ENCODE measurements at regions of chr15 and their contacts with region 1.

Region 1: GRCh38 chr15:34367101-34368081 is at the start of gene LPCAT4:
- DNase-seq: peak; percentile 81 to 91 (median 89)
- ATAC-seq: peak; percentile 94
- H3K4me3 ChIP-seq: peak within 1 kb of the TSS; percentile 82
- H3K4me3 Mint-ChIP-seq: peak within 1 kb of the TSS; percentile 94 to 99 (median 96)
- H3K27ac ChIP-seq: peak within 1 kb of the TSS; percentile 88
- H3K27ac Mint-ChIP-seq: peak within 1 kb of the TSS; percentile 86 to 98 (median 94)
- H3K4me1 ChIP-seq: peaks cover 13 to 17% of the 10 kb centered on the region in 2 donors
- H3K4me1 Mint-ChIP-seq: peaks cover 5 to 45% (median 27%) of the 10 kb centered on the region in 7 donors
- H3K27me3 ChIP-seq: no peaks in the 10 kb centered on the region
- H3K27me3 Mint-ChIP-seq: no peaks in the 10 kb centered on the region
- total RNA-seq, gene LPCAT4: 40.0 to 95.5 (median 63.4) TPM

Region 2: GRCh38 chr15:33425142-33425541 is 942.2 kb before region 1 on chr15:
- CTCF ChIA-PET with region 1: no interaction called
- POLR2A ChIA-PET with region 1: no interaction called
- intact Hi-C with region 1: no loop called
- DNase-seq: no peak
- ATAC-seq: no peak
- H3K4me3 ChIP-seq: no peak overlapping the region
- H3K4me3 Mint-ChIP-seq: no peak overlapping the region
- H3K27ac ChIP-seq: no peak overlapping the region
- H3K27ac Mint-ChIP-seq: no peak overlapping the region
- H3K4me1 ChIP-seq: no peaks in the 10 kb centered on the region
- H3K4me1 Mint-ChIP-seq: no peaks in the 10 kb centered on the region
- H3K27me3 ChIP-seq: no peaks in the 10 kb centered on the region
- H3K27me3 Mint-ChIP-seq: peaks cover 3 to 22% (median 9%) of the 10 kb centered on the region in 5 donors

Region 3: DNA sequence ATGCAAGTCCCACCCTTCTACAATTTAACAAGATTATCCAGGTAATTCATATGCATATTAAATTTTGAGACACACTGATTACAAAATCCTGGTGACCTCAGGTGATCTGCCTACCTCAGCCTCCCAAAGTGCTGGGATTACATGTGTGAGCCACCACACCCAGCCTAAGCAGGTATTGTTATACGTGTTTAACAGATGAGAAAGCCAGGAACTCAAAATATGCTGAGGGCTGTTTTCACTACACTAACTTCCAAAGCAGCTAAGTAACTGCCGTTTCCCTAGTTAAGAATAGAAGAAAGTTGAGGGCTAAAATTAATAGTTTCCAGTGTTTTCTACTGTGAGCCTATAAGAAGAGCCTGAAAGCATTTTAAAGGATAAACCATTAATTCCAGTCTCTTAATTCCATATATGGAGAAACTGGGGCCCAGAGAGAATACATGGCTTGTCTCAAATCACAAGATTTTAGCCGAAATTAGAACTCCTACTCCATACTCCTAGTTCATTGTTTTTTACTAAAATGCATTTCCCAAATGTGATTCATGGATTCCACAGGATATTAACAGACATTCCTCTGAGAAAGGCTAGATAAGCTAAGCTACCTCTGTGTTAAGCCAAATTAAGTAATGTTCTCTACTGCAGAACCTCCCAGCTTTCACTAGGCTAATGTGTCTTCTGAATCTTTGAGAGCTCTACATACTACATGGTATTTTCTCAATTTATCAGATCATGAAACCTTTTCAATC is 311.4 kb before region 1 on chr15:
- CTCF ChIA-PET with region 1: interaction called, 6 read pairs
- POLR2A ChIA-PET with region 1: no interaction called
- intact Hi-C with region 1: loop called in 1 of 2 experiments (anchors 1 kb)
- DNase-seq: no peak
- ATAC-seq: no peak
- H3K4me3 ChIP-seq: no peak overlapping the region
- H3K4me3 Mint-ChIP-seq: no peak overlapping the region
- H3K27ac ChIP-seq: no peak overlapping the region
- H3K27ac Mint-ChIP-seq: no peak overlapping the region
- H3K4me1 ChIP-seq: no peaks in the 10 kb centered on the region
- H3K4me1 Mint-ChIP-seq: no peaks in the 10 kb centered on the region
- H3K27me3 ChIP-seq: no peaks in the 10 kb centered on the region
- H3K27me3 Mint-ChIP-seq: peaks cover 0 to 15% (median under 1%) of the 10 kb centered on the region in 5 donors

Region 4: GRCh38 chr15:34223904-34224596 is 143.3 kb before region 1 on chr15:
- CTCF ChIA-PET with region 1: interaction called, 4 read pairs
- POLR2A ChIA-PET with region 1: interaction called, 9 read pairs
- intact Hi-C with region 1: loop called in 1 of 2 experiments (anchors 1 kb)
- DNase-seq: no peak
- ATAC-seq: no peak
- H3K4me3 ChIP-seq: peak overlapping the region; percentile 82
- H3K4me3 Mint-ChIP-seq: peak overlapping the region; percentile 88 to 100 (median 94)
- H3K27ac ChIP-seq: peak overlapping the region; percentile 83
- H3K27ac Mint-ChIP-seq: peak overlapping the region; percentile 93 to 100 (median 99)
- H3K4me1 ChIP-seq: peaks cover 5 to 13% of the 10 kb centered on the region in 2 donors
- H3K4me1 Mint-ChIP-seq: peaks cover 9 to 35% (median 30%) of the 10 kb centered on the region in 7 donors
- H3K27me3 ChIP-seq: no peaks in the 10 kb centered on the region
- H3K27me3 Mint-ChIP-seq: peaks cover 0 to 5% (median 0%) of the 10 kb centered on the region in 5 donors

Region 5: DNA sequence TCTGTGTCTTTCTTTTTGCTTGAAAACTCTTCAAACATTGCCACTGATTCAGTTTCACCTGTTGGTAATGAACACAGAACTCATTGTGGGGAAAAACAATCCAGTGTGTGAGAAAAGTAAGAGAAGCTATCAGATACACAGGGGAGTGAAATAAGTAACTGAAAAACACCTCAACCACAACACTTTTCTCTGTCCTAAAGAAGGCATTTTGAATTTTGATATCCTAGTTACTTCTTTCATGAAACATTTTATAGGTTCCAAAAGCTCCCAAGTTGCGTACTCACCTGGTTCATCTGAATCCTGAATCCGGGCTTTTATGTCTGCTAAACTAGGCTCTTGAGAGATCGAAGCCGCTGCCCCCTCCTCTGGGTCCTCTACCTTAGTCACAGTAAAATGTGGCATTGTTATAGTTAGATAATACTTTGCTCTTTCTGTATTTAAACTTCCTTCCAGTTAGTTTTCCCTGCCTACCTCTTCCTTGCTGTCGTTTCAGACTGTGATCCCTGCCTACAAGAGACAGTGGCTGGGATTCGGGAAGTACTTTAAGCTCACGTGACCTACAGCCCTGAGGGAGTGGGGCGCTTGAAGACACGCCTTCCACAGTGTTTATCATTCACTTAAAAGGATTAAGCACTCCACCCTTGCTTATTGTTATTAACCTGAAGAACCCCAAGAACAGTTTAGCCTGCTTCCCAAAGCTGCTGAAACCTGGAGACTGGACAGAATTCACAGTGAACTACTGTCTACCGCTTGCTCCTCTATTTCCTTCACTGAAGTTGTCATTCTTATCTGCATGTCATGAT is 48.9 kb before region 1 on chr15:
- CTCF ChIA-PET with region 1: interaction called, 3 read pairs
- POLR2A ChIA-PET with region 1: interaction called, 10 read pairs
- intact Hi-C with region 1: loop called in 1 of 2 experiments (anchors 1 kb)
- DNase-seq: peak in 4 of 9 donors; percentile 29 to 38 (median 36)
- ATAC-seq: peak; percentile 83
- H3K4me3 ChIP-seq: peak overlapping the region; percentile 71
- H3K4me3 Mint-ChIP-seq: peak overlapping the region; percentile 92 to 99 (median 97)
- H3K27ac ChIP-seq: peak overlapping the region; percentile 76
- H3K27ac Mint-ChIP-seq: peak overlapping the region; percentile 91 to 99 (median 95)
- H3K4me1 ChIP-seq: peaks cover 0 to 24% of the 10 kb centered on the region in 2 donors
- H3K4me1 Mint-ChIP-seq: peaks cover 36 to 85% (median 62%) of the 10 kb centered on the region in 7 donors
- H3K27me3 ChIP-seq: no peaks in the 10 kb centered on the region
- H3K27me3 Mint-ChIP-seq: no peaks in the 10 kb centered on the region

Region 6: DNA sequence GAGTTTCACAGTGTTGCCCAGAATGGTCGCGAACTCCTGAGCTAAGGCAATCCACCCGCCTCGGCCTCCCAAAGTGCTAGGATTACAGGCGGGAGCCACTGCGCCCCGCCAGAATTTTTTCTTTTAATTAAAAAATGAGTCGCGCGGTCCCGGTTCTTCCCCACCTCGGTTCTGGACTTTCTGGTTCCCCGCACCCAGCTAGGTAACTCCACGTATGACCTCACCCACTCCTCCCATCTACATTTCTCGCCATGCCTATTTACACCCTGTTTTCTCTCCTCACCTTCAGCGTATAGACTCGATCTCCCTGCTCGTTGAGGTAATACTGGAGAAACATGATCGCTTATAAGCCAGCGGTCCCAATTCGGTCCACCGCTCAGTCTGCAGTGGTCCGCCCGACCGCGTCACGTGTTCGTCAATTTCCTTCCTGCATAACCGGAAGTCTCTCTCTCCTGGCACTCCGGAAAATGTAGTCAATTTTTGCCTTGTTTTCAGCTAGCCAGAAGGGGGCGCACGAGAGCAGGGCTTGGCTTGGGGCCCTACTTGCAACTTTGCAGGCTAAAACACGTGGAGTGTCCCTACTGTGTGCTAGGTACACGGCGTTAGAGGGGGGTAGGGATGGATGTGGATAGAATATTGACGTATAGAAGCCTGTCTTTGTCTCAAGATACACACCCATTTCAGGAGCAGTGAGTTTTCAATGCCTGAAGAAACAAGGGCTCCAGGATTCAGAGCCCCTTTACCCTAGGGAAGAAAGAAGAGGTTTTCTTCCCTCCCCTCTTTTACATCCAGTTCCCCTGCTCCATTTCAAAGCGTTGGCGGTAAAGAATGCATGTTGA is 24.4 kb before region 1 on chr15 and contains the starts of genes NOP10 and NUTM1:
- CTCF ChIA-PET with region 1: interaction called, 27 read pairs
- POLR2A ChIA-PET with region 1: interaction called, 49 read pairs
- intact Hi-C with region 1: loop called (anchors 1 kb)
- DNase-seq: peak; percentile 86 to 96 (median 90)
- ATAC-seq: peak; percentile 95
- H3K4me3 ChIP-seq: peak within 1 kb of the TSS; percentile 98
- H3K4me3 Mint-ChIP-seq: no peak within 1 kb of the TSS
- H3K27ac ChIP-seq: peak within 1 kb of the TSS; percentile 91
- H3K27ac Mint-ChIP-seq: peak within 1 kb of the TSS in 8 of 9 donors; percentile 41 to 96 (median 82)
- H3K4me1 ChIP-seq: peaks cover 9 to 13% of the 10 kb centered on the region in 2 donors
- H3K4me1 Mint-ChIP-seq: peaks cover 19 to 29% (median 24%) of the 10 kb centered on the region in 7 donors
- H3K27me3 ChIP-seq: no peaks in the 10 kb centered on the region
- H3K27me3 Mint-ChIP-seq: no peaks in the 10 kb centered on the region
- total RNA-seq, gene NOP10: 31.9 to 176 (median 75.7) TPM
- total RNA-seq, gene NUTM1: not detected

Region 7: GRCh38 chr15:34456658-34457057 is 89.3 kb after region 1 on chr15:
- CTCF ChIA-PET with region 1: no interaction called
- POLR2A ChIA-PET with region 1: no interaction called
- intact Hi-C with region 1: no loop called
- DNase-seq: no peak
- ATAC-seq: no peak
- H3K4me3 ChIP-seq: no peak overlapping the region
- H3K4me3 Mint-ChIP-seq: no peak overlapping the region
- H3K27ac ChIP-seq: no peak overlapping the region
- H3K27ac Mint-ChIP-seq: no peak overlapping the region
- H3K4me1 ChIP-seq: no peaks in the 10 kb centered on the region
- H3K4me1 Mint-ChIP-seq: no peaks in the 10 kb centered on the region
- H3K27me3 ChIP-seq: peaks cover 4 to 6% of the 10 kb centered on the region in 2 donors
- H3K27me3 Mint-ChIP-seq: peaks cover 16 to 63% (median 21%) of the 10 kb centered on the region in 5 donors

Region 8: DNA sequence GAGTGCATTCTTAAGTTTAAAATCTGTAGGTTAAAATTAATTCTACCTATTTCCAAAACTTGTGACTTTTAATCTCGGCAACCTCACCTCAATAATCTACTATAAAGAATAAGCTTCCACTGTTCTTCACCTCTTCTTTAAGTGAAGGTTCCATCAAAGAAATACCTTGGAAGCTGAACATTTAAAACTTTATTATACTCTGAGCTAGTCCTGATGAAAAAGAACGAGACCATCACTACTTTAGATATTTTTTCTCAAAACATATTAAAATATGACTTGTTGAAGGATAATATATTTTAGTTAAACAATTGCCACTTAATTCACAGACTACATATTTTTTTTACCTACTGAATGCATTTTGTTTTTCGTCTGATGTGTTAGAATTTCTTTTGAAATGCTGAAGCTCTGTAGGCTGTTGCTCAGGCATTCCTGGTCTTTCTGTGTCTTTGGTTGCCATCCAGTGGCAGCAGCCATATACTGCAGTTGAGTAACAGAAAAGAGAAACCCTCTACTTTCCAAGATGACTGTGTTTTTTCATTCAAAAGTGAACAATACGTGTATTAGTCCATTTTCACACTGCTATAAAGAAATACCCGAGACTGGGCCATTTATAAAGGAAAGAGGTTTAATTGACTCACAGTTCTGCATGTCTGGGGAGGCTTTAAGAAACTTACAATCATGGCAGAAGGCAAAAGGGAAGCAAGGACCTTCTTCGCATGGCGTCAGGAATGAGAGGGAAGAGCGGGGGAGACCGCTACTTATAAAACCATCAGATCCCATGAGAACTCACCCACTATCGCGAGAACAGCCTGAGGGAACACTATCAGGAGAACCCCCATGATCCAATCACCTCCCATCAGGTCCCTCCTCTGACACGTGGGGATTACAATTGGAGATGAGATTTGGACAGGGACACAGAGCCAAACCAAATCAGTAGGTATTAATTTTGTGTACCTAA is 220.6 kb after region 1 on chr15:
- CTCF ChIA-PET with region 1: interaction called, 8 read pairs
- POLR2A ChIA-PET with region 1: interaction called, 7 read pairs
- intact Hi-C with region 1: loop called (anchors 1 kb)
- DNase-seq: peak in 8 of 9 donors; percentile 39 to 74 (median 62)
- ATAC-seq: peak; percentile 72
- H3K4me3 ChIP-seq: no peak overlapping the region
- H3K4me3 Mint-ChIP-seq: peak overlapping the region; percentile 0 to 83 (median 76)
- H3K27ac ChIP-seq: no peak overlapping the region
- H3K27ac Mint-ChIP-seq: peak overlapping the region in 4 of 9 donors; percentile 3 to 83 (median 40)
- H3K4me1 ChIP-seq: peaks cover 0 to 4% of the 10 kb centered on the region in 2 donors
- H3K4me1 Mint-ChIP-seq: peaks cover 5 to 13% (median 6%) of the 10 kb centered on the region in 7 donors
- H3K27me3 ChIP-seq: no peaks in the 10 kb centered on the region
- H3K27me3 Mint-ChIP-seq: peaks cover 3 to 32% (median 11%) of the 10 kb centered on the region in 5 donors

Region 9: DNA sequence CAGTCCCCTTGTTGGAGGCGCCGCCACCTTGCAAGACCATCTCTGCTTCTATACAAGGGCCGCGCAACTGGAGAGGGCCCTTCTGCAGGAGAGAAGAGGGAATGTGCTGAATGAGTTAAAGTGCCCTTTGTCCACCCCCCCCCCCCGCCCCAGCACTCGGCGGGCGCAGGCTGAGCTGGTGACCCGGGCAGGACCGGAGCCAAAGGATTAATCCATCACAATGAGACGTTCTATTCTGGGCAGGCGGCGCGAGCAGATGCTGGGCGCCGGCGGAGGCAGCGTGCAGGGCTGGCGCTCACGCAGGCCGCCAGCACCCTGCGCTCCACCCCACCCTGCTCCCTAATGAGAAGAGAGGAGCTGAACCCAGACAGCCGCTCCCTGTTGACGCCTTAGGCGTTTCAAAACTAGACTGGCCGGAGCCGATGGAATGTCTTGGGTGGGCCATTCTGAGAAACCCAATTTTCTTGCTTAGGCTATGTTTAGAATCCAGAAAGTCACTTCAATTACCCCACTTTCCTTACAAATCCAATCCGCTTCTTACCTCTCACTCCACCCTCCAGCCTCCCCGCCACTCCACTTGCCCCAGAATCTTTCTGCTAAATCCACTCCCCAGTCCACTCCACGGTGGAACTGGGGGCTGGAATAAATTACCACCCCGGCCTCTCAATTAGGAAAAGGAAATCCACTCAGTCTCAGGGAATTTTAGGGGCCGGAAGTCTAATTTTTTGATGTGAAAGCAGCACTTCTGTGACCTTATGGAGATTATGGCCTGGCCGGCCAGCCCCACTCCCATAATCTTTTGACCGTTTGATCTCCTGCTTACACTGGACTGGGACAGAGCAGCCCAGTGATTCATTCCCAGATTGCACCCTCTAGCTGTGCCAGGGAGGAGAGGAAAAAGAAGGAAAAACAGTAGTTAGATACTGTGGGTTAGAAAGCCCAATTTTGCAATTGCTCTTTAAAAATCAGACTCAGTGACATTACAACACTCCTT is 354.7 kb after region 1 on chr15:
- CTCF ChIA-PET with region 1: no interaction called
- POLR2A ChIA-PET with region 1: no interaction called
- intact Hi-C with region 1: no loop called
- DNase-seq: no peak
- ATAC-seq: no peak
- H3K4me3 ChIP-seq: no peak overlapping the region
- H3K4me3 Mint-ChIP-seq: no peak overlapping the region
- H3K27ac ChIP-seq: no peak overlapping the region
- H3K27ac Mint-ChIP-seq: no peak overlapping the region
- H3K4me1 ChIP-seq: no peaks in the 10 kb centered on the region
- H3K4me1 Mint-ChIP-seq: peaks cover 0 to 5% (median 0%) of the 10 kb centered on the region in 7 donors
- H3K27me3 ChIP-seq: no peaks in the 10 kb centered on the region
- H3K27me3 Mint-ChIP-seq: peaks cover 54 to 66% (median 56%) of the 10 kb centered on the region in 5 donors